ENCODE measurements at regions of chr2 and their contacts with region 1.

Region 1: GRCh38 chr2:37026050-37026449 is 58.1 kb downstream of the HEATR5B start:
- DNase-seq: peak; percentile 25
- ATAC-seq: peak; percentile 64; the same call in 1 of the 2 replicates
- H3K4me3 ChIP-seq: no peak overlapping the region
- H3K27ac ChIP-seq: no peak overlapping the region
- H3K4me1 ChIP-seq: no peaks in the 10 kb centered on the region
- H3K27me3 ChIP-seq: no peaks in the 10 kb centered on the region
- CTCF ChIP-seq: peak; percentile 43; the same call in 1 of the 2 replicates

Region 2: DNA sequence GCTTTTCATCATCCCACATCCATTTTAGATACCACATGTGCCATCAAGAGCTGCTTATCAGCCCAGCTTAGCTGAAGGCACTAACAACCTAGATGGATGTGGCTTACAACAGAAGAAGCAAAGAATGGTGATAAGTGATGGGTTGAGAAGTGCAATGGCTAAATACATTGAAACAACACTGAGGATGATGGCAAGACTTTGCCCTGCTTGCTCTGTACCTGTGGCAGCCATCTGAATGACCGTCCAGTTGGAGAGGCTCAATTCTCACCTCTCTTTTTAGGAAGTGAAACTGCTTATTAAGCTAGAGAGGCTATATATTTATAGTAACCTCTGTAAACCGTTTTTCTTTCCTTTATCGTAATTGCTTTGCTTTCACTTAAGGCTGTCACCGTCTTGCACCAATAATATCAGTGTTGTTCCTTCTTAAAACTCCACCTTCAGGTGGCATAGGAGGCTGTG is 64.0 kb after region 1 on chr2:
- CTCF ChIA-PET with region 1: no interaction called
- POLR2A ChIA-PET with region 1: interaction called, 10 read pairs
- intact Hi-C with region 1: no loop called
- DNase-seq: no peak
- ATAC-seq: no peak
- H3K4me3 ChIP-seq: no peak overlapping the region
- H3K27ac ChIP-seq: no peak overlapping the region
- H3K4me1 ChIP-seq: peaks cover 12% of the 10 kb centered on the region
- H3K27me3 ChIP-seq: no peaks in the 10 kb centered on the region
- CTCF ChIP-seq: no peak

Measured in PC-3 (cell line).